Ovary (tissue), 10 donors: ENCODE measurements at regions of chr15 and their contacts with region 1.

Region 1: GRCh38 chr15:38072348-38073177 is 138.1 kb downstream of the TMCO5A start:
- DNase-seq: peak; percentile 60 to 83 (median 67)
- H3K4me3 ChIP-seq: peak overlapping the region; percentile 51
- H3K27ac ChIP-seq: peak overlapping the region; percentile 61 to 89
- H3K4me1 ChIP-seq: peaks cover 3% of the 10 kb centered on the region
- H3K27me3 ChIP-seq: no peaks in the 10 kb centered on the region
- CTCF ChIP-seq: peak in 2 of 3 donors; percentile 11 to 14
- EP300 ChIP-seq: no peak
- POLR2A ChIP-seq: no peak

Region 2: DNA sequence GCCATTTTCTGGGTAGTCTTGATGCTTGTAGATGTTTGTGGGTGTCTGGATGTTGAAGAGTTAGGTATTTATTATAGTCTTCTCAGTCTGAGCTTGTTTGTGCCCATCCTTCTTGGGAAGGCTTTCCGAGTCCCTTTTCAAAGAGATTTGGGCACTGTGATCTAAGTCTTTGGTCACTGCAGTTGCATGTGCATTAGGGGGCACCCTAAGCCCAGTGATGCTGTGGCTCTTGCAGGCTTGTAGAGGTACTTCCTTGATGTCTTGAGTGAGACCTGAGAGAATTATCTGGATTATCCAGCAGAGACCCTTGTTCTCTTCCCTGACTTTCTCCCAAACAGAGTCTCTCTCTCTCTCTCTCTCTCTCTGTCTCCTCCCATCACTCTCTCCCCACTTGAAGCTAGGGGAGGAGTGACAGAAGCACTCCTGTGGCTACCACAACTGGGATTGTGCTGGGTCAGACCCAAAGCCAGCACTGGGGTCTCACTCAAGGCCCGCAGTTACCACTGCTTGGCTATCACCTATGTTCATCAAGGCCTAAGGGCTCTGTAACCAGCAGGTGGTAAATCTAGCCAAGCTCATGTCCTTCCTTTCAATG is 69.6 kb before region 1 on chr15:
- intact Hi-C with region 1: no loop called
- DNase-seq: no peak
- H3K4me3 ChIP-seq: no peak overlapping the region
- H3K27ac ChIP-seq: no peak overlapping the region
- H3K4me1 ChIP-seq: no peaks in the 10 kb centered on the region
- H3K27me3 ChIP-seq: no peaks in the 10 kb centered on the region
- CTCF ChIP-seq: peak in 1 of 3 donors; percentile 19
- EP300 ChIP-seq: no peak
- POLR2A ChIP-seq: no peak

Region 3: GRCh38 chr15:38129531-38130204 is 57.1 kb after region 1 on chr15:
- intact Hi-C with region 1: loop called in 2 of 4 experiments (anchors 2 to 10 kb)
- DNase-seq: peak; percentile 79 to 91 (median 83)
- H3K4me3 ChIP-seq: peak overlapping the region; percentile 27
- H3K27ac ChIP-seq: peak overlapping the region in 1 of 2 donors; percentile 81
- H3K4me1 ChIP-seq: no peaks in the 10 kb centered on the region
- H3K27me3 ChIP-seq: no peaks in the 10 kb centered on the region
- CTCF ChIP-seq: no peak
- EP300 ChIP-seq: peak; percentile 6
- POLR2A ChIP-seq: no peak

Region 4: DNA sequence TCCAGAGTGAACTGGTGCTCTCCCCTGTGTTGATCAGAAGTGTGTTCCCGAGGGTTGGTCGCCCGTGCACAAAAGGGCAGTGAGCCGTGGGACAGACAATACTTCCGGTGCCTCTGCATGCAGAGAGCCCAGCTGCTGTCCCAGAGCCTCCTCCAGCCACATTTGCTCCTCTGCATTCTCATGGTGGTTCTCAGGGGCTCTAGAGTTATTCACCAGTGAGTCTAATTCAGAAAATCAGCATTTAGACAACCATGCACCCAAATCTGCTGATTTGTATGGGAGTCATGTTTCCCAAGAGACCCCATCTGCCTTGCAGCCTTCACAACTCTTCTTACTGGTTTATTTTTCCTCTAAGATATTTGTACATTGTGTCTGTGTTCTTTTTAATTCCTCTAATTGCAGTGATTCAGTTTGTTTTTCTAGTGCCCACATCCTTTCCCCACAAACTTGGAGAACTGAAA is 73.1 kb after region 1 on chr15:
- intact Hi-C with region 1: no loop called
- DNase-seq: no peak
- H3K4me3 ChIP-seq: no peak overlapping the region
- H3K27ac ChIP-seq: no peak overlapping the region
- H3K4me1 ChIP-seq: no peaks in the 10 kb centered on the region
- H3K27me3 ChIP-seq: no peaks in the 10 kb centered on the region
- CTCF ChIP-seq: no peak
- EP300 ChIP-seq: no peak
- POLR2A ChIP-seq: no peak

Region 5: GRCh38 chr15:38252481-38253412 is 180.2 kb after region 1 on chr15 and contains the start of gene SPRED1:
- intact Hi-C with region 1: loop called in 1 of 4 experiments (anchors 10 kb)
- DNase-seq: peak; percentile 72 to 87 (median 77)
- H3K4me3 ChIP-seq: peak within 1 kb of the TSS; percentile 97
- H3K27ac ChIP-seq: peak within 1 kb of the TSS; percentile 99
- H3K4me1 ChIP-seq: peaks cover 2% of the 10 kb centered on the region
- H3K27me3 ChIP-seq: no peaks in the 10 kb centered on the region
- CTCF ChIP-seq: no peak
- EP300 ChIP-seq: no peak
- POLR2A ChIP-seq: peak; percentile 5
- total RNA-seq, gene SPRED1: 18.3 to 30.5 (median 20.6) TPM

Region 6: DNA sequence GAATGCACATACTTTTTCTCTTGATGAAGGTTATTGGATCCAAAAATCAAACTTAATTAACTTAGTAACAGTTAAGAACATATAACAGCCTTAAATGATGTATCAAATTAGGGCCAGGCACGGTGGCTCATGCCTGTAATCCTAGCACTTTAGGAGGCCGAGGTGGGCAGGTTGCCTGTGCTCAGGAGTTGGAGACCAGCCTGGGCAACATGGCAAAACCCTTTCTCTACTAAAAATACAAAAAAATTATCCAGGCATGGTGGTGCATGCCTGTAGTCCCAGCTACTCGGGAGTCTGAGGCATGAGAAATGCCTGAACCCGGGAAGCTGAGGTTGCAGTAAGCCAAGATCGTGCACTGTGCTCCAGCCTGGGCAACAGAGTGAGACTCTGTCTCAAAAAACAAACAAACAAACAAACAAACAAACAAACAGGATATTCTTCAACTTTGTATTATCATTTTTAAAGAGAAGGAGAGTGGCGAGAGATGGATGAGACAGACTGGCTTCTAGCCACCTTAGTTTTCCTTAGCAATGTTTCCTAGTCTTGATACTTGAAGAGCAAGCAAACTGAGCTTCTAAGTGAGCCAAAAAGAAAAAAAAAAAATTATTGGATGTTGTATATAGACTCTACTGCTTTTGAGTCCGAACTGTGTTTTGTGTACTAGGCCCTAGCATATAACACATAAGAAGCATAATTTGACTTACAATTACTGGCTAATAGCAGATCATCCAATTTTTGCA is 193.9 kb after region 1 on chr15:
- intact Hi-C with region 1: no loop called
- DNase-seq: no peak
- H3K4me3 ChIP-seq: no peak overlapping the region
- H3K27ac ChIP-seq: no peak overlapping the region
- H3K4me1 ChIP-seq: peaks cover 3% of the 10 kb centered on the region
- H3K27me3 ChIP-seq: no peaks in the 10 kb centered on the region
- CTCF ChIP-seq: no peak
- EP300 ChIP-seq: no peak
- POLR2A ChIP-seq: no peak